ENCODE measurements at regions of chr3 and their contacts with region 1.

Region 1: GRCh38 chr3:87614998-87615397 is 338.6 kb upstream of the POU1F1 start:
- DNase-seq: no peak
- H3K4me3 ChIP-seq: no peak overlapping the region
- CTCF ChIP-seq: no peak

Region 2: GRCh38 chr3:87563712-87564111 is 51.3 kb before region 1 on chr3:
- in situ Hi-C with region 1: loop called (anchors 5 kb)
- DNase-seq: no peak
- H3K4me3 ChIP-seq: no peak overlapping the region
- CTCF ChIP-seq: no peak

Measured in astrocyte of the cerebellum (primary cell).